Posterior vena cava (tissue), 2 donors: ENCODE measurements at regions of chr20 and their contacts with region 1.

Region 1: GRCh38 chr20:48685861-48686771 is 141.7 kb downstream of the PREX1 start:
- DNase-seq: no peak

Region 2: GRCh38 chr20:48709744-48710695 is 23.9 kb after region 1 on chr20:
- intact Hi-C with region 1: loop called in 1 of 2 experiments (anchors 1 kb)
- DNase-seq: peak; percentile 31